ENCODE measurements at regions of chr11 and their contacts with region 1.

Region 1: GRCh38 chr11:14454861-14455632 is 44.6 kb downstream of the COPB1 start:
- DNase-seq: peak in 1 of 2 experiments; percentile 52
- H3K4me3 ChIP-seq: no peak overlapping the region
- H3K27ac ChIP-seq: no peak overlapping the region
- H3K4me1 ChIP-seq: no peaks in the 10 kb centered on the region
- H3K27me3 ChIP-seq: no peaks in the 10 kb centered on the region
- CTCF ChIP-seq: peak in 2 of 3 experiments; percentile 35 to 42; a peak in 2 of 4 replicates
- EP300 ChIP-seq: no peak
- POLR2A ChIP-seq: no peak
- RAD21 ChIP-seq: peak; percentile 53 to 65

Region 2: DNA sequence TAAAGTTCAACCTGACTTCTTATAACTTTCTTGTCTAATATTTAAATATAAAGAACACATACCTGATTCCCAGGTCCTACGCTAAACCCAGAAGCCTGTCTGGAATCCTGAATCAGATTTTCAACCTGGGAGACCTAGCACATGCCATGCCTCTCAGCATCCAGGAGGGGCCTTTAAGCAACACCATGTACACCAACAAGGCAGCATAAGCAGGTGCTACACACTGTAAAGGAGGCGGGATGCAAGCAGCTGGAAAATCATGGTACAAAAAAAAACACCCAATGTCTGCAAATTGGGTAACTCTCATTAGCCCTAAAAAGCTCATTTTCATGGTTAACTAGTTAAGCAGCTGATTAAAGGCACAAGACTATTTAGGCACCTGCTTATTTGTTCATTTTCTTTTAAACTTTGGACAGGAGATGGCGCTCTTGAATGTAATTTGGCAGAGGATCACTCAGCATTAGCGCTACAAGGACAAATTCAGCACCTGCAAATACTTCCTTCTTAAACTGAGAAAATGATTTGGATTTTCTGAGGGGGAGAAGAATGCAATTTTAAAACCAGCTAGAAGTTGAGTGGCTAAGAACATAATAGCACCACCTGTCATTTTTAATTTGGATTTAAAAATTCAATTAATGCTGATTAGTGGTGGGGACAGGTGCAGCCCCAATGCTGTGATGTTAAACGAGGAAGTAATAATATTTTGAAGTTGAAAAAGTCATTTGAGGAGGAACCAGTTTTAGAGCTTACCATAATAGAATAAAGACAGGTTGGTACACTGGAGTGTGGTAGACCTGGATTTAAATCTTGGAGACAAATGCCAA is 682.6 kb before region 1 on chr11:
- CTCF ChIA-PET with region 1: interaction called, 11 read pairs
- POLR2A ChIA-PET with region 1: no interaction called
- DNase-seq: peak; percentile 31 to 55
- H3K4me3 ChIP-seq: no peak overlapping the region
- H3K27ac ChIP-seq: no peak overlapping the region
- H3K4me1 ChIP-seq: peaks cover 0 to 4% (median under 1%) of the 10 kb centered on the region in 4 experiments; a peak in 3 of 7 replicates
- H3K27me3 ChIP-seq: no peaks in the 10 kb centered on the region
- CTCF ChIP-seq: peak; percentile 1 to 68 (median 48)
- EP300 ChIP-seq: no peak
- POLR2A ChIP-seq: no peak
- RAD21 ChIP-seq: peak; percentile 85 to 88

Region 3: DNA sequence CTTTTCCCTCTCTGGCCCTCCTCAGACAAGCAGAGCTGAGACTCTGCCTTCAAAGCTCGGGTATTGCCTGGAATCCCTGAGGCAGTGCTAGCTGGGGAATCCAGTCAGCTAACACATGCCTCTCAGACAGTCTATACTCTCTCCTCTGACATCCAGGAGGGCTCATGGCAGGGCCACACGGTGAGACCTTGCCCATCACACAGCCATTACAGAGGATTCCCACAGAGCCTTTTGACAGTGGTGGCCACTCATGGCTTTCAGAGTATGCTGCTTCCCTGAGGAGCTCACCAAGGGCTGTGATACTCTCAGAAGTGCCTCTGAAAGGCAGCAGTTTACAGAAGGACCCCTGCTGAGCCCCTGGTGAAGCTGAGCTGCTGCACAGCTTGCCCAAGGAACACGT is 261.4 kb before region 1 on chr11:
- CTCF ChIA-PET with region 1: no interaction called
- POLR2A ChIA-PET with region 1: no interaction called
- DNase-seq: no peak
- H3K4me3 ChIP-seq: no peak overlapping the region
- H3K27ac ChIP-seq: no peak overlapping the region
- H3K4me1 ChIP-seq: peaks cover 0 to 3% (median 0%) of the 10 kb centered on the region in 4 experiments; a peak in 2 of 7 replicates
- H3K27me3 ChIP-seq: no peaks in the 10 kb centered on the region
- CTCF ChIP-seq: no peak
- EP300 ChIP-seq: no peak
- POLR2A ChIP-seq: no peak
- RAD21 ChIP-seq: no peak

Region 4: GRCh38 chr11:14288189-14288935 is 166.7 kb before region 1 on chr11:
- CTCF ChIA-PET with region 1: interaction called, 17 read pairs
- POLR2A ChIA-PET with region 1: no interaction called
- DNase-seq: no peak
- H3K4me3 ChIP-seq: no peak overlapping the region
- H3K27ac ChIP-seq: no peak overlapping the region
- H3K4me1 ChIP-seq: no peaks in the 10 kb centered on the region
- H3K27me3 ChIP-seq: no peaks in the 10 kb centered on the region
- CTCF ChIP-seq: no peak
- EP300 ChIP-seq: no peak
- POLR2A ChIP-seq: no peak
- RAD21 ChIP-seq: no peak

Region 5: GRCh38 chr11:14413307-14414069 is 41.6 kb before region 1 on chr11:
- CTCF ChIA-PET with region 1: interaction called, 82 read pairs
- POLR2A ChIA-PET with region 1: interaction called, 3 read pairs
- DNase-seq: peak; percentile 43 to 70
- H3K4me3 ChIP-seq: no peak overlapping the region
- H3K27ac ChIP-seq: no peak overlapping the region
- H3K4me1 ChIP-seq: peaks cover 0 to 21% (median 5%) of the 10 kb centered on the region in 4 experiments; a peak in 3 of 7 replicates
- H3K27me3 ChIP-seq: no peaks in the 10 kb centered on the region
- CTCF ChIP-seq: peak; percentile 55 to 75 (median 64)
- EP300 ChIP-seq: no peak
- POLR2A ChIP-seq: no peak
- RAD21 ChIP-seq: peak; percentile 46 to 68

Region 6: GRCh38 chr11:14443638-14444037 is 11.4 kb before region 1 on chr11:
- CTCF ChIA-PET with region 1: interaction called, 60 read pairs
- POLR2A ChIA-PET with region 1: interaction called, 3 read pairs
- DNase-seq: no peak
- H3K4me3 ChIP-seq: no peak overlapping the region
- H3K27ac ChIP-seq: no peak overlapping the region
- H3K4me1 ChIP-seq: no peaks in the 10 kb centered on the region
- H3K27me3 ChIP-seq: no peaks in the 10 kb centered on the region
- CTCF ChIP-seq: no peak
- EP300 ChIP-seq: no peak
- POLR2A ChIP-seq: no peak
- RAD21 ChIP-seq: no peak

Region 7: DNA sequence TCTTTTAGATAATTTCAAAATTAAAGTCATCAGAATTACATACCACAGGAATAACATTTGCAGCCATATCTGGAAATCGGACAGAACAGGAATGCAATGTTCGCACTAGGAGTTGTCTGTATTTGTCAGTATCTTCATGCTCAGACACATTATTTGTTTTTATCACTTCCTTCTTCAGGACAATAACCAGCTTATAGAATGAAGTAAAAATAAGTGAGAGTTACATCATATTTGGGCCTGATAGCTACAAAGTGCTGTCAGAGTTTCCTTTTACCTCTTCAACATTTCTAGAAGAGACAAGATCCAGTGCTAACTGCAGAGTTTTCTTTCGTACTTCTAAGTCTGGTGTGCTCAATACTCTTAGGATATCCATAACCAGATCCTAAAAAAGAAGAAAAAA is 25.7 kb after region 1 on chr11:
- CTCF ChIA-PET with region 1: interaction called, 11 read pairs
- POLR2A ChIA-PET with region 1: interaction called, 3 read pairs
- DNase-seq: no peak
- H3K4me3 ChIP-seq: no peak overlapping the region
- H3K27ac ChIP-seq: no peak overlapping the region
- H3K4me1 ChIP-seq: no peaks in the 10 kb centered on the region
- H3K27me3 ChIP-seq: peaks cover 0 to 1% (median 0%) of the 10 kb centered on the region in 4 experiments; a peak in 1 of 7 replicates
- CTCF ChIP-seq: no peak
- EP300 ChIP-seq: no peak
- POLR2A ChIP-seq: no peak
- RAD21 ChIP-seq: no peak

Measured in H1 (cell line).